PC-9 (cell line): ENCODE measurements at regions of chr14 and their contacts with region 1.

Region 1: DNA sequence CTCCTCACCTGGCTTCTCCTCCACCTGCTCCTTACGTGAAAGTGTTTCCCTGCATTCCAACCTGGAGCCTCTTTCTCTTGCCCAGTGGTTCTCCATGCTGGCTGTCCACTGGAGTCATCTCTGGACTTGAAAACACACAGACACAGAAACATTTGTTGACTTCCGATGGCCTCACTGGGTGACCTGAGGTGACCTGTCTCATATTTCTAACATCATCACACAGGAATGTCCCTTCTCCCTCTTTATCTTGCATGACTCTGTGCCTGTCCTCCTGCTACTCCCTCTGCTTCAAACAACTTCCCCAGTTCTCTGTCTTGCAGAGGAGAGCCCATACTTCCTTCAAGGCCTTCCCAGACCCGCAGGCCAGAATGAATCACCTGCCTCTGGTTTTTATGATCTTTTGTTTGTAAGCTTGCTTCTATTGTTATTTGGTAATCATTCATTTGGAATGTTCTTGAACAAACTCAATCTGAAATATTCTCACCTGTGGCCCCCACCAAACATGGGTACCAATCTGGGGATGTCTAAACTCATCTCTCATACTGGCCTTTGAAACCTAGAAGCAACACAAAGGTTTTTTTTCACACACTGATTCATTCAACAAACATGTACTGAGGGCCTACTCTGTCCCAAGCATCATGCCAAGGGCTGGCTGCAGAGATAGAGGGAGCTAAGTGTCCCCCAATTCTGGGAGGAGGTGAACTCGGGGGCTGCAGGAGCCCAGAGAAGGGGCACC is 9.7 kb upstream of the RIN3 start:
- DNase-seq: peak; percentile 70 to 99
- H3K4me3 ChIP-seq: no peak overlapping the region
- H3K27ac ChIP-seq: peak overlapping the region; percentile 85
- H3K4me1 ChIP-seq: peaks cover 69% of the 10 kb centered on the region
- H3K27me3 ChIP-seq: no peaks in the 10 kb centered on the region
- CTCF ChIP-seq: no peak

Region 2: GRCh38 chr14:92531106-92531873 is 27.4 kb after region 1 on chr14:
- CTCF ChIA-PET with region 1: no interaction called
- POLR2A ChIA-PET with region 1: no interaction called
- intact Hi-C with region 1: no loop called
- DNase-seq: no peak
- H3K4me3 ChIP-seq: no peak overlapping the region
- H3K27ac ChIP-seq: no peak overlapping the region
- H3K4me1 ChIP-seq: no peaks in the 10 kb centered on the region
- H3K27me3 ChIP-seq: no peaks in the 10 kb centered on the region
- CTCF ChIP-seq: no peak

Region 3: GRCh38 chr14:92644171-92644969 is 140.4 kb after region 1 on chr14:
- CTCF ChIA-PET with region 1: interaction called, 4 read pairs
- POLR2A ChIA-PET with region 1: no interaction called
- intact Hi-C with region 1: loop called (anchors 2 kb)
- DNase-seq: peak; percentile 66 to 99
- H3K4me3 ChIP-seq: no peak overlapping the region; the same call in 1 of the 2 replicates
- H3K27ac ChIP-seq: peak overlapping the region; percentile 99
- H3K4me1 ChIP-seq: peaks cover 60% of the 10 kb centered on the region
- H3K27me3 ChIP-seq: no peaks in the 10 kb centered on the region
- CTCF ChIP-seq: no peak

Region 4: GRCh38 chr14:92680781-92681650 is 177.1 kb after region 1 on chr14:
- CTCF ChIA-PET with region 1: no interaction called
- POLR2A ChIA-PET with region 1: no interaction called
- intact Hi-C with region 1: loop called (anchors 2 kb)
- DNase-seq: peak; percentile 76 to 89
- H3K4me3 ChIP-seq: no peak overlapping the region
- H3K27ac ChIP-seq: peak overlapping the region; percentile 75
- H3K4me1 ChIP-seq: peaks cover 8% of the 10 kb centered on the region
- H3K27me3 ChIP-seq: no peaks in the 10 kb centered on the region
- CTCF ChIP-seq: peak; percentile 98